Right lobe of liver (tissue), 6 donors: ENCODE measurements at regions of chr15 and their contacts with region 1.

Region 1: GRCh38 chr15:74615508-74616365 is at the start of gene CLK3:
- DNase-seq: peak; percentile 98 to 99 (median 98)
- ATAC-seq: peak; percentile 82 to 89 (median 86)
- H3K4me3 ChIP-seq: peak within 1 kb of the TSS; percentile 94 to 99 (median 98)
- H3K27ac ChIP-seq: peak within 1 kb of the TSS; percentile 91 to 99 (median 92)
- H3K4me1 ChIP-seq: peaks cover 0 to 27% (median 5%) of the 10 kb centered on the region in 4 donors
- H3K27me3 ChIP-seq: no peaks in the 10 kb centered on the region
- CTCF ChIP-seq: no peak
- POLR2A ChIP-seq: peak; percentile 87
- total RNA-seq, gene CLK3: 27.8 to 44.1 (median 33.2) TPM

Region 2: GRCh38 chr15:74529921-74530320 is 85.8 kb before region 1 on chr15:
- intact Hi-C with region 1: no loop called
- DNase-seq: no peak
- ATAC-seq: peak in 1 of 4 donors; percentile 25
- H3K4me3 ChIP-seq: no peak overlapping the region
- H3K27ac ChIP-seq: no peak overlapping the region
- H3K4me1 ChIP-seq: peaks cover 0 to 5% (median 0%) of the 10 kb centered on the region in 4 donors
- H3K27me3 ChIP-seq: no peaks in the 10 kb centered on the region
- CTCF ChIP-seq: no peak
- POLR2A ChIP-seq: no peak

Region 3: DNA sequence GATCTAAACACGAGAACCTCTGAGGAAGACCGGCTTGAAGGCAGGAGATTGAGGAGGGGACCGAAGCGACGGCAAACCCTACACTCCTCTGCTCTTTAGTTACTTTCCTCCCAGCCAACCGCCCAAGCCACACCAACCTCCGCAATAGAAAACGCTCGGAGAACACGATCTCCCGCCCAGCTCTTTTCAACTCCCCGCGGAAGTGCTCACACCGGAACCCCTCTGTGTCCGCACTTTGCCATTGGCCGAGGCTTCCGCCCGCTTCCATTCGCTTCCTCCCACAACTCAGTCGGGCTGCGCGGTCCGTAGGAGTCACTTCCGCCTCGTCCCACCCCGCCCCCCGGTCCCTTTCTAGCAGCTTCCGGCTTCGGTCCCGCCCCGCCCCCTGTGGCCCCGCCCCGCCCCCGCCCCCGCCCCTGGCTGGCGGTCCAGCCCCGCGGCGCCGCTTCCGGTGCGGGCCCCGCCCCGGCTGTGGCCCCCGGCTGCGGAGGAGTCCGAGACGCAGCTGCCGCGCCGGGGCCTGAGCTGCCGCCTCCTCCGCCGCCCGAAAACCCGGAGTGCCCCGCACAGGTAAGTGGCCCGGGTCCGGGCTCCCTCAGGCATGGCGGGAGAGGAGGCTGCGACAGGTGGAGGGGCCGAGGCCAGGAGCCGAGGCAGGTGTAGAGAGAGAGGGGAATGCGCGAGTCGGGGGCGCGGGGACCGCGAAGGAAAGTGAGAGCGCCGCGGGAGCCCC is 74.8 kb before region 1 on chr15 and contains the start of gene ARID3B:
- intact Hi-C with region 1: loop called (anchors 5 to 10 kb)
- DNase-seq: peak; percentile 98 to 99 (median 99)
- ATAC-seq: peak; percentile 98 to 99 (median 98)
- H3K4me3 ChIP-seq: peak within 1 kb of the TSS; percentile 90 to 96 (median 91)
- H3K27ac ChIP-seq: peak within 1 kb of the TSS; percentile 42 to 82 (median 71)
- H3K4me1 ChIP-seq: peaks cover 0 to 14% (median 3%) of the 10 kb centered on the region in 4 donors
- H3K27me3 ChIP-seq: no peaks in the 10 kb centered on the region
- CTCF ChIP-seq: no peak
- POLR2A ChIP-seq: peak; percentile 66
- total RNA-seq, gene ARID3B: 1.5 to 3.2 (median 2.3) TPM

Region 4: GRCh38 chr15:74955796-74956647 is 340.3 kb after region 1 on chr15:
- intact Hi-C with region 1: no loop called
- DNase-seq: peak; percentile 77 to 84 (median 79)
- ATAC-seq: peak; percentile 43 to 74 (median 64)
- H3K4me3 ChIP-seq: peak overlapping the region; percentile 54 to 64 (median 55)
- H3K27ac ChIP-seq: peak overlapping the region; percentile 36 to 45 (median 37)
- H3K4me1 ChIP-seq: peaks cover 0 to 18% (median 0%) of the 10 kb centered on the region in 4 donors
- H3K27me3 ChIP-seq: peaks cover 0 to 6% of the 10 kb centered on the region in 2 donors
- CTCF ChIP-seq: peak in 3 of 4 donors; percentile 26 to 47 (median 41)
- POLR2A ChIP-seq: no peak